OCI-LY7 (cell line): ENCODE measurements at regions of chr9 and their contacts with region 1.

Region 1: DNA sequence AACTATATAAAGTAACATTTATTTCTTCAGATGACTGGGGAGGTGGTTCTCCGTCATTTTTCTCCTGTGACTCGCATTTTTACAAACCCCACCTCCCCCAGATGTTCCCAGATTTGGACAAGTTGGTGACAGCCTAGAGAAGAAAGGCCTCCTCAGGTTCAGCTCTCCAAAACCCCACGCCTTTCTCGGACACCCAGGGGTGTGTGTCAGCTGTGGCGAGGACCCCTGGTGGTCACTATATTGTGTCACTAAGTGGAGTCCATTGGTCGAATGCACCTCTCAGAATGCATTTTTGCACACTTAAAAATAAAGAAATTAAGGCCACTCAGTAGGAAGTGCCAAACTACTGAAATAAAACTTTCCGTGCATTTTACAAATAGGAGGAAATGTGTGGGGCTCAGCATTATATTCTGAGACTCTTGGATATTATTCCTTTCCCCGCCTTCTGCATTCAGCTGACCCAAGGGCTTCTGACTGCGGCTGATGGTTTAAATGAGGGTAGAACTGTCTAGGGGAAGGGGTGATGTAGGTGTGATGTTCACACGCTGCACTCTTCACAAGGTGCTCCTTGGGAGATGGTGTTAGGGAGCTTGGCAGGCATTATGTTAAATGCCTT is 47.6 kb downstream of the ACO1 start:
- DNase-seq: peak; percentile 35
- H3K4me3 ChIP-seq: no peak overlapping the region
- H3K27ac ChIP-seq: no peak overlapping the region
- H3K4me1 ChIP-seq: no peaks in the 10 kb centered on the region
- CTCF ChIP-seq: peak; percentile 73

Region 2: DNA sequence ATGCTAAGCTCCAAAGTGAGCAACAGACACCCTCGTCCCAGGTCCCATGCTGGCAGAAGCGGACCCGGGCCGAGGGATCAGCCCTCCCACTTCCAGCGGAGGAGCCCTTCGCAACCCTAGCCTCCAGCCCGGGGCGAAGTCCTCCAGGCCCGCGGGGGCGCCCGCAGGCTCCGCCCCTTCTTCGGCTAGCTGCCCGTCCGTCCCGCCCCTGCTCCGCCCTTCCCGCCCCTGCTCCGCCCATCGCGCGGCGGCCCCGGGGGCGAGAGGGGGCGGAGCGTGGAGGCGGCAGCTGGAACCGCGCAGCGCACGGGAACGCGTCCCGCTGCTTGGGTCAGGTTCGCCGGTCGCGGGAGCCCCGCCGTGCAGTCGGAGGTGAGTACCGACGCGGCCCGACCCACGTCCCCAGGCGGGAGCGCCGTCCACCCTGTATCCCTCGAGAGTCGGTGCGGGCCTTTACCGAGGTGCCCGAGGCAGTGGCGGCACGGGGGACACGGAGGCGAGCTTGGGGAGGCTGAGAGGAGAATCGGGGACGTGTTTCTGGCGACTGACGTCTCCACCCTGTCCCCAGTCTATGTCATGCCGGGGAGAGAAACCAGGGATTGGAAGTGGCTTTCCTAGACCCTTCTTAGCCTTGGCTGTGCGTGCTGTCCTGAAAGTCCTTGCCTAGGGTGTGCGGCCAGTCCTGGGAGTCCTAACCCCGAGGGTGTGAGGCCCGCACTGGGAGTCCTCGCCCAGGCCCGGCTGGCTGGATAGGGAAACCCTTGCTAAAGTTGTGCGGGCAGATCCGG is 47.5 kb before region 1 on chr9 and contains the start of gene ACO1:
- CTCF ChIA-PET with region 1: interaction called, 5 read pairs
- POLR2A ChIA-PET with region 1: interaction called, 3 read pairs
- intact Hi-C with region 1: loop called (anchors 2 kb)
- DNase-seq: peak; percentile 87
- H3K4me3 ChIP-seq: peak within 1 kb of the TSS; percentile 93
- H3K27ac ChIP-seq: no peak within 1 kb of the TSS
- H3K4me1 ChIP-seq: peaks cover 23% of the 10 kb centered on the region
- CTCF ChIP-seq: peak; percentile 48; the same call in 1 of the 2 replicates
- total RNA-seq, gene ACO1: 8.8 and 9.2 TPM in 2 replicates